ENCODE measurements at regions of chr13 and their contacts with region 1.

Region 1: GRCh38 chr13:104571161-104571892 is 1505.1 kb upstream of the SLC10A2 start:
- DNase-seq: no peak
- ATAC-seq: peak; percentile 78

Region 2: DNA sequence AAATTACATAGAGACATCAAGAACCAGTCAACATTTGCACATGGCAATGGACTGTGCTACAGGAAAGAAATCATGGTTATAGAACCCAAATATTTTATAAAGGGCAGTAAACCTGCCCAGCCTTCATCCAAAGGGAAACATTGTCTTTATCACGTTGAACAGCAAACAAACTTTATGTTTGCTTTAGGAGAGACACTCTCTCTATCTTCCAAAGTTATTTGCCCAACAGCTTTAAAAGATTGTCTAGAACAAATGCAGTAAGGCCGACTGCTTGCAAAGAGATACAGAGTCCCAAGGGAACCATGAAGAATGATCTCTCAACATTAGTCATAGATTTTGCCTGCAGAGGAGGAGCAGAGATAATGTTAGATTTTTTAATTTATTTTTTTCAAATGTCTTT is 181.6 kb before region 1 on chr13:
- intact Hi-C with region 1: no loop called
- DNase-seq: no peak
- ATAC-seq: no peak

Region 3: DNA sequence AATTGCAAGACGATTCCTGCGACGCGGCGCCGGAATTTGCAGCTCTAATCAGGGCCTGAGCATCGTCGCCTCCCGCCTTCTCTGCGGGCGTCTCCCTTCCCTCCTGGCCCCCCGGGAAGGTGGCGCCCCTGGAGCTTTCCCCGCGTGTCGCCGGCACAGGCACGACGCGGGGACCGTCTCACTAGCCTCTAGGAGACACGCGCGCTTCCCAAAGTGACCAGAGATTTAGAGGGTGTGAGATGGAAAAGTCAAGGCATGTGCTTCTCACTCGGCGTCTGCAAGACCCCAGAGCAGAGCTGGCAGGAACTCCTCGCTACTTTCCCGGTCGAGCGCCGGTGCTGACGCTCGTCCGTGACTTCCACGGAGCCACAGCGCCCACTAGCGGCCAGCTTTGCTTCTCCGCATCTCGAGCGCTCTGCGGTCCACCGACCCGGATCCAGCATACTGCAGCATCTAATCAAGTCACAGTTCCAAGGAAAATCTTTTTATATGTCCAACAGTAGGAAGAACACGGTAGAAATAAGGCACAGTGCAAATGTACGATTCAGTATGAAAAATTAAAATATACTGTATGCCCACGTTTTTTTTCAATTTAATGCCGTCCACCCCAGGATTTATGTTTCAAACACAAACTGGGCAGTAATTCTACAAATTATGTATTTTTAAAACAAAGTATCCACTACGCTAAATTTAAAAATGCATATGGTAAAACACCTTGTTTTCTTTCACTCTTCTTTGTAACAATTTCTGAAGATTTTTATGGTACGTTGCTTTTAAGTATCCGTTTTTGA is 1965.1 kb after region 1 on chr13:
- intact Hi-C with region 1: loop called (anchors 10 kb)
- DNase-seq: peak; percentile 96
- ATAC-seq: peak; percentile 81